ENCODE measurements at regions of chr6 and their contacts with region 1.

Region 1: DNA sequence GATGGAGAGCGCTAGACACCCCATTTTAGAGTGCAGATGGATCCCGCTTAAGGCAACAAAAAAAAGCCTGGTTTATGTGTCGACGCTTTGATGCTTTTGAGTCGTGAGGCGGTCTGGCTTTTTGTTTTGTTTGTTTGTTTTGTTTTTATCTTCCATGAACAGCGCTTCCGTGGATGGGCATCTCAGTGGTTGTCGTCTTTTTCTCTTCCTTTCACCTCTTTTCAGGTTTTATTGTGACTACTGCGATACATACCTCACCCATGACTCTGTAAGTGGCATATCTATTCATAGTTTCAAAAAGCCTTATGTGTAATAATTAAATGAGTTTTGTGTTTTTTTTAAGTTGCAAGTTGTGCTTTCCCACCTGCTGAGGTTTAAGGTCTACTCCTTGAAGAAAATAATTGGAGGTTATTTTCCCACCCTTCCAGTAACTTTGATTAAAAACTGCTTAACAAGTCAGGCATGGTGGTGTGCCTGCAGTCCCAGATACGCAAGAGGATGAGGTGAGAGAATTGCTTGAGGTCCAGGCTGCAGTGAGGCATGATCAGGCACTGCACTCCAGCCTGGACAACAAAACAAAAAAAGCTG is 476 bp downstream of the SNRPC start:
- DNase-seq: no peak
- ATAC-seq: no peak

Region 2: DNA sequence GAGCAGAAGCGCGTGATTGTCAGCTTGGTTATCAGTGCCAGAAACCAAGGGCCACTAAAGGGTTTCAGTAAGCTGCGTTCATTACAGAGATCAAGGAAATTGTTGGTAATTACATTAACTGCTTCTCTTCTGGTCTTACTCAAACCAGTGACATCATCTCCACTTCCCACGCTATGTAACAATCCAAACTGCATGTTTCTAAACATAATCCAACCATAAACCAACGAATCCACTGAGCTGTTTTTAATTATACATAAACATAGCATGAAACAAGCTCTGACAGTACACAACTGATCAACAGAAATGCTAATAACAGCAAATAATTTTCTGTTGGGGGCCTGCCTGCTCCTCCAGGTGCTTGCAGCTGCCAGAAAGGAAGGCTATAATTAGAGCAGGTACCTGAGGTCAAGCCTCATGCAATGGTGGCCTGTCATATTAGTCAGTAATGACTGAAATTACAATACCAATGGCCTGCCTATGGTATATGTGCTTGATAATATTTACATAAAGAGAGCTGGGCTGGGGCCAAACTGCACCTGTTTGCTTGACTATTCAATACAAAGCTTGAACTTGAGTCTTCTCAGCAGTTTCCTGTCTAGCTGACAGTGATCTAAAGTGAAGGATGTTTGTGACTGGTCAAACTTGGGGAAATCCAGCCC is 101.3 kb before region 1 on chr6:
- intact Hi-C with region 1: loop called (anchors 2 kb)
- DNase-seq: no peak
- ATAC-seq: peak; percentile 45

Region 3: GRCh38 chr6:34696739-34697543 is 60.8 kb before region 1 on chr6 and contains the start of gene ILRUN:
- intact Hi-C with region 1: loop called (anchors 5 kb)
- DNase-seq: peak; percentile 99
- ATAC-seq: peak; percentile 95
- total RNA-seq, gene ILRUN: 143 TPM

Region 4: GRCh38 chr6:34723203-34723602 is 34.6 kb before region 1 on chr6:
- intact Hi-C with region 1: no loop called
- DNase-seq: no peak
- ATAC-seq: no peak

Region 5: GRCh38 chr6:34791701-34792235 is 34.0 kb after region 1 on chr6 and contains the start of gene BLTP3A:
- intact Hi-C with region 1: loop called (anchors 5 kb)
- DNase-seq: peak; percentile 90
- ATAC-seq: peak; percentile 95
- total RNA-seq, gene BLTP3A: 17.1 TPM

Region 6: DNA sequence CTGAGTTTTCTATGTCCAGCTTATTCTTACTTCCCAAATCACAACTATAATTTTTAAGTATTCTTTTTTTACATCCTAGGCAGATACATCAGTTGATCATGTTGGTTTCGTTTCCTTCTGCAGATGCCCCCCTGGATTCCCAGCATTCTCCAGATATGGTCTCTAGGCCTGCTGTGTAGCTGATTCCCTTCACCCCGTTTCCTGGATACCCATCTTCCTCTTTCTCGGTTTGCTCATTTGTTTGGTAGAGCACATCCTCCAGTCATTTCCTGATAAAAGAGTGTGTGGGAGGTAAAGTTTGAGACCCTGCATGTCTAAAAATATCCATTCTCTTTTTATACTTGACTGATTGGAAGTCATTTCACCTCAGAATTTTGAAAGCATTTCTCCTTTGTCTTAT is 197.7 kb after region 1 on chr6:
- intact Hi-C with region 1: loop called (anchors 5 kb)
- DNase-seq: no peak
- ATAC-seq: no peak

Measured in Right ventricle myocardium inferior (tissue), 1 donor.